PC-9 (cell line): ENCODE measurements at regions of chr13 and their contacts with region 1.

Region 1: GRCh38 chr13:109468123-109468522 is 318.3 kb downstream of the IRS2 start:
- DNase-seq: no peak
- H3K4me3 ChIP-seq: no peak overlapping the region
- H3K27ac ChIP-seq: no peak overlapping the region
- H3K4me1 ChIP-seq: no peaks in the 10 kb centered on the region
- H3K27me3 ChIP-seq: no peaks in the 10 kb centered on the region
- CTCF ChIP-seq: no peak

Region 2: DNA sequence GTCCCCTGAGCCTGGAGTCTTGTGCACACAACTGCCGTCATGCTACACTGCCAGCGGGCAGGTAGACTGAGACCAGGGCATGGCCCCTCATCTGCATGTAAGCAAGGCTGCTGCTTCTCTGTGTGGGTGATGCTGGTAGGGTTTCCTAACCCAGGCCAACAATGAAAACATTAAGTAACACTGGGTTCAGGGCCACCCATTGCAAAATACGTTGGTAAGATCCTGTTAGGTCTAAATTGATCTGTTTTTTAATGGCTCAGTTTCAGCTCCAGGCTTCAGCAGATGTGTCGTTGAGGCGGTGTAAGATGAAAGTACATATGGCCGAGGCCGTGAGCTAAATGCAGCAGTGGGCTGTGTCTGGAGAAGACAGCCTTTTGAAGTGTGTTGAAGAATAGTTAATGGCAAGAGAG is 65.1 kb before region 1 on chr13:
- CTCF ChIA-PET with region 1: no interaction called
- POLR2A ChIA-PET with region 1: no interaction called
- intact Hi-C with region 1: no loop called
- DNase-seq: no peak
- H3K4me3 ChIP-seq: no peak overlapping the region
- H3K27ac ChIP-seq: no peak overlapping the region
- H3K4me1 ChIP-seq: no peaks in the 10 kb centered on the region
- H3K27me3 ChIP-seq: no peaks in the 10 kb centered on the region
- CTCF ChIP-seq: no peak

Region 3: GRCh38 chr13:109479991-109480691 is 12.0 kb after region 1 on chr13:
- CTCF ChIA-PET with region 1: no interaction called
- POLR2A ChIA-PET with region 1: interaction called, 12 read pairs
- intact Hi-C with region 1: no loop called
- DNase-seq: peak in 1 of 2 experiments; percentile 59
- H3K4me3 ChIP-seq: no peak overlapping the region
- H3K27ac ChIP-seq: no peak overlapping the region
- H3K4me1 ChIP-seq: 0 out of 2 replicates have a peak, but pooled peaks cover 7% of the 10 kb centered on the region
- H3K27me3 ChIP-seq: no peaks in the 10 kb centered on the region
- CTCF ChIP-seq: no peak